Tibial artery (tissue), 4 donors: ENCODE measurements at regions of chr1 and their contacts with region 1.

Region 1: DNA sequence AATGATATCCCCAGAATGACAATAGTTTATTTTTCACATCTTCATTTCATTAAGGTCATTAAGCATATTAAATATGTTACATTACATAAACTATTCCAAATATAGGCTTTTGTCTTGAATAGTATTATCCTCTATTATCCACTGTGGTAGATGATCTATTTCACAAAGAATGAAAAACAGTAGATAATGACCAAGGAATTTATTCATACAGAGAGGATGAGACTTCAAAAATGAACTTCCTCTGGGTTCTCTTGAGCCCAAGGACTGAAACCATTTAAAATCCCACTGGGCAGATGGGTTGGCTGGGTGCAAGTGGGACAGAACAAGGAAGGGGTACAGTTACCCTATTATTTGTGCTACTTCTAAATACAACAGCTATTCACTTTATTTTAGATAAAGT is 33.0 kb downstream of the PTPN14 start:
- DNase-seq: no peak
- H3K4me3 ChIP-seq: no peak overlapping the region
- H3K27ac ChIP-seq: no peak overlapping the region
- H3K4me1 ChIP-seq: peaks cover 0 to 31% (median 21%) of the 10 kb centered on the region in 4 donors
- H3K27me3 ChIP-seq: no peaks in the 10 kb centered on the region
- CTCF ChIP-seq: no peak

Region 2: GRCh38 chr1:214446772-214447556 is 71.4 kb before region 1 on chr1:
- intact Hi-C with region 1: no loop called
- DNase-seq: no peak
- H3K4me3 ChIP-seq: no peak overlapping the region
- H3K27ac ChIP-seq: no peak overlapping the region
- H3K4me1 ChIP-seq: peaks cover 0 to 28% (median 13%) of the 10 kb centered on the region in 4 donors
- H3K27me3 ChIP-seq: no peaks in the 10 kb centered on the region
- CTCF ChIP-seq: no peak

Region 3: DNA sequence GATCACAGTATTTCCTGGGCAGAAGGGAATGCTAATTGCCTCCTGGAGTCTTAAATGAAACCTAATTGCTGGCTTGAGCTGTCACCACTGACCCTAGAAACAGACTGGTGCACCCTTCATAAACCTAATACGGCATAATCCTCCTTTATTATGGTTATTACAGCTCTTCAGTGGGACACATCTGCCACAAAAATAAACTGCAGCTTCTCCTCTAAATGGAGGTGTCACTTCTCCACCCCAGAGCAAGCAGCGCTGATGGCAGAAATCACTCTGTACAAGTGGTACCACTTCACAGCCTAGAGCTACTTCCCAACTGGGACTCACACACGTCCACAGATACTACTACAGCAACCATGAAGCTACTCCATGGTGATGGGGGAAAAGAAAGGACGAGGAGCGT is 22.0 kb after region 1 on chr1:
- intact Hi-C with region 1: loop called (anchors 1 kb)
- DNase-seq: no peak
- H3K4me3 ChIP-seq: no peak overlapping the region
- H3K27ac ChIP-seq: no peak overlapping the region
- H3K4me1 ChIP-seq: peaks cover 0 to 38% (median 3%) of the 10 kb centered on the region in 4 donors
- H3K27me3 ChIP-seq: no peaks in the 10 kb centered on the region
- CTCF ChIP-seq: no peak